ENCODE measurements at regions of chr10 and their contacts with region 1.

Region 1: GRCh38 chr10:32357056-32357735 is 10.2 kb upstream of the EPC1 start:
- DNase-seq: peak in 24 of 35 experiments; percentile 11 to 61 (median 21)
- ATAC-seq: peak; percentile 41 to 90 (median 60)
- H3K4me3 ChIP-seq: no peak overlapping the region
- H3K4me3 Mint-ChIP-seq: peak overlapping the region; percentile 29 to 51 (median 31)
- H3K27ac ChIP-seq: peak overlapping the region; percentile 61
- H3K27ac Mint-ChIP-seq: peak overlapping the region; percentile 89 to 91
- H3K4me1 ChIP-seq: peaks cover 17 to 52% of the 10 kb centered on the region in 2 experiments
- H3K4me1 Mint-ChIP-seq: peaks cover 78 to 85% (median 83%) of the 10 kb centered on the region in 3 donors
- H3K27me3 ChIP-seq: no peaks in the 10 kb centered on the region
- H3K27me3 Mint-ChIP-seq: no peaks in the 10 kb centered on the region

Region 2: DNA sequence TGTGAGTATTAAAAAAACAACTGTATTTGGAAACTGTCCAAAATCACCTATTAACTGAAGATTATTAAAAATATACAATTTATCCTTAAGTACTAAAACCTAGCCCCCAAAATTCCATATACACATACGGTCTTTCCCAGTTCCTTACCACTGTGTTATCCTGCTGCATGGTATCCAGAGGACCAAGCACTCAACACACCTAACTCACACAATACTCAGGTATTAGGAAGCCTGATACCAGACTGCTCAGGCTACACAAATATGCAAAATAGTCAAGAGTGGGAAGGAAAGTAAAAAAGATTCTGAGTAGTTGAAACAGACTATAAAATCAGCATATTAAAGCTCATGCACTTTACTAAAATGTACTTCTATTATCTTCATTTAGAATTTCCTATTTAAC is 77.4 kb before region 1 on chr10:
- CTCF ChIA-PET with region 1: no interaction called
- POLR2A ChIA-PET with region 1: no interaction called
- DNase-seq: no peak
- ATAC-seq: no peak
- H3K4me3 ChIP-seq: no peak overlapping the region
- H3K4me3 Mint-ChIP-seq: no peak overlapping the region
- H3K27ac ChIP-seq: no peak overlapping the region
- H3K27ac Mint-ChIP-seq: peak overlapping the region in 1 of 2 donors; percentile 66
- H3K4me1 ChIP-seq: no peaks in the 10 kb centered on the region
- H3K4me1 Mint-ChIP-seq: peaks cover 0 to 28% (median 19%) of the 10 kb centered on the region in 3 donors
- H3K27me3 ChIP-seq: no peaks in the 10 kb centered on the region
- H3K27me3 Mint-ChIP-seq: no peaks in the 10 kb centered on the region

Region 3: GRCh38 chr10:32323051-32323450 is 34.1 kb before region 1 on chr10:
- CTCF ChIA-PET with region 1: no interaction called
- POLR2A ChIA-PET with region 1: interaction called, 4 to 17 read pairs
- DNase-seq: no peak
- ATAC-seq: no peak
- H3K4me3 ChIP-seq: no peak overlapping the region
- H3K4me3 Mint-ChIP-seq: no peak overlapping the region
- H3K27ac ChIP-seq: no peak overlapping the region
- H3K27ac Mint-ChIP-seq: no peak overlapping the region
- H3K4me1 ChIP-seq: peaks cover 31 to 37% of the 10 kb centered on the region in 2 experiments
- H3K4me1 Mint-ChIP-seq: peaks cover 88 to 96% (median 89%) of the 10 kb centered on the region in 3 donors
- H3K27me3 ChIP-seq: no peaks in the 10 kb centered on the region
- H3K27me3 Mint-ChIP-seq: no peaks in the 10 kb centered on the region

Measured in T-cell (primary cell).